Psoas muscle (tissue), 8 donors: ENCODE measurements at regions of chr15 and their contacts with region 1.

Region 1: GRCh38 chr15:88610701-88611231 is 10.4 kb upstream of the AEN start:
- DNase-seq: no peak
- ATAC-seq: no peak
- H3K4me3 ChIP-seq: no peak overlapping the region
- H3K27ac ChIP-seq: no peak overlapping the region
- H3K4me1 ChIP-seq: no peaks in the 10 kb centered on the region
- H3K27me3 ChIP-seq: peaks cover 0 to 36% (median 4%) of the 10 kb centered on the region in 3 donors
- CTCF ChIP-seq: no peak

Region 2: GRCh38 chr15:88454867-88455810 is 155.6 kb before region 1 on chr15:
- intact Hi-C with region 1: loop called in 1 of 2 experiments (anchors 5 kb)
- DNase-seq: peak; percentile 45 to 68
- ATAC-seq: peak; percentile 86 to 94 (median 91)
- H3K4me3 ChIP-seq: no peak overlapping the region
- H3K27ac ChIP-seq: no peak overlapping the region
- H3K4me1 ChIP-seq: no peaks in the 10 kb centered on the region
- H3K27me3 ChIP-seq: no peaks in the 10 kb centered on the region
- CTCF ChIP-seq: peak; percentile 64

Region 3: DNA sequence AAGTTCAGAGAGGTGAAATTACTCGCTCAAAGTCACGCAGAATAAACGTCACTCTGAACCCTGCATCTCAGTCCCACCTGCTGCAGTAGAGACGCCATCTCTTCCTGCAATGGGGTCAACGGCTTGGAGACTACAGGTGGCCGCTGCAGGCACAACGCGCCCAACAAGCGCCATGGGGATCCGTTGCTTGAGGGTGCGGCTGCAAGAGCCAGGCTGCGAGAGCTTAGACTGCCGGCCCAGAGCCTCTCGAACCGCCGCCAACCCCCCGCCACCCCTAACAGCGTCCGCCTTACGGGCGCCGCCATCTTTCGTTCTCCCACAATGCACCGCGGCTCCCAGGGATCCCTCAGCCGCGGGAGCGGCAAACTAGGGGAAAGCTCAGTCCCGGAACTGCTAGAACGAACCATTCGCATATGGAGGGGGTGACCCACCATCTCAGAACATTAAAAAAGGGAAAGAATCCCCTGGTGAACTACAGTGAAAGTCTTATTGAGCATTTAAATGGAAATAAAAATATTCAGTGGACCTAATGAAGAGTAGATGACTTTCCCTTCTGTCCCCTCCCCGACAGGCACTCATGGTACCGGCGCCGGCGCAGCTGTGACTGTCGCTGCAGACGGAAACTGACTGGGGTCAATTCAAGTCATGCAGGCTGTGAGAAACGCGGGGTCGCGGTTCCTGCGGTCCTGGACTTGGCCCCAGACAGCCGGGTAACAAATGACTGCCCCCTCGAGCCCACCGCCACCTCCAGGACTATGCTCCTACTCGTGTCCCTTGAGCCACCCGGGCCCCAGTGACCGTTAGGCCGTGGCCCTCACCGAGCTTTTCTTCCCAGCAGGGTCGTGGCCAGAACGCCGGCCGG is 143.5 kb before region 1 on chr15 and contains the starts of genes MRPL46 and MRPS11:
- intact Hi-C with region 1: loop called in 1 of 2 experiments (anchors 5 kb)
- DNase-seq: peak; percentile 92 to 95
- ATAC-seq: peak; percentile 97 to 98 (median 98)
- H3K4me3 ChIP-seq: peak within 1 kb of the TSS; percentile 95
- H3K27ac ChIP-seq: peak within 1 kb of the TSS; percentile 99
- H3K4me1 ChIP-seq: peaks cover 23% of the 10 kb centered on the region
- H3K27me3 ChIP-seq: no peaks in the 10 kb centered on the region
- CTCF ChIP-seq: no peak
- total RNA-seq, gene MRPL46: 47.3 to 87.9 (median 65.5) TPM
- total RNA-seq, gene MRPS11: 48.4 to 62.2 (median 54.5) TPM

Region 4: GRCh38 chr15:88476635-88477060 is 134.1 kb before region 1 on chr15:
- intact Hi-C with region 1: loop called (anchors 5 kb)
- DNase-seq: no peak
- ATAC-seq: peak; percentile 70 to 84 (median 79)
- H3K4me3 ChIP-seq: no peak overlapping the region
- H3K27ac ChIP-seq: no peak overlapping the region
- H3K4me1 ChIP-seq: no peaks in the 10 kb centered on the region
- H3K27me3 ChIP-seq: no peaks in the 10 kb centered on the region
- CTCF ChIP-seq: peak; percentile 34

Region 5: GRCh38 chr15:88546248-88547129 is 64.3 kb before region 1 on chr15 and contains the start of gene DET1:
- intact Hi-C with region 1: no loop called
- DNase-seq: peak; percentile 95 to 97
- ATAC-seq: peak; percentile 99
- H3K4me3 ChIP-seq: peak within 1 kb of the TSS; percentile 77
- H3K27ac ChIP-seq: peak within 1 kb of the TSS; percentile 81
- H3K4me1 ChIP-seq: peaks cover 4% of the 10 kb centered on the region
- H3K27me3 ChIP-seq: no peaks in the 10 kb centered on the region
- CTCF ChIP-seq: peak; percentile 72
- total RNA-seq, gene DET1: 6.9 to 13.3 (median 8.1) TPM

Region 6: DNA sequence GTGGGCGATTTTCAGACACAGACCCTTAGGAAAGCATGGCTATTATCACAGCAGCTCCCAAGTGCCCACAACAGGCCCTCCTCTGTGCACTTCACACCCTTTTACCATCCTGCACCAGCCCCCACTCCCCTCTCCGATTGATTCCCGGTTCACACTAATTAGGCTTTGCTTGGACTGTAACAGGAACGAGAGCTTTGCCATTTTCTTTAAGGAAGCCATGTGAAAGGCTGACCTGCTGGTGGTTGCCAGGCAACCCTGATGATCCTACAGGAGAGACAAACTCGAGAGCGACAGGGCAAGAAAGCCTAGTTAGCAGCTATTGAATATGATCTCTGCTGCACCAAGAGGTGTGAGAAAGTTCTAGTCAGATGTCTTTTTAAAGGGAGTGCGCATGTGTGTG is 36.1 kb before region 1 on chr15:
- intact Hi-C with region 1: loop called in 1 of 2 experiments (anchors 5 kb)
- DNase-seq: no peak
- ATAC-seq: no peak
- H3K4me3 ChIP-seq: no peak overlapping the region
- H3K27ac ChIP-seq: no peak overlapping the region
- H3K4me1 ChIP-seq: peaks cover 6% of the 10 kb centered on the region
- H3K27me3 ChIP-seq: no peaks in the 10 kb centered on the region
- CTCF ChIP-seq: no peak